Naive thymus-derived CD4-positive, alpha-beta T cell (primary cell): ENCODE measurements at regions of chr1 and their contacts with region 1.

Region 1: DNA sequence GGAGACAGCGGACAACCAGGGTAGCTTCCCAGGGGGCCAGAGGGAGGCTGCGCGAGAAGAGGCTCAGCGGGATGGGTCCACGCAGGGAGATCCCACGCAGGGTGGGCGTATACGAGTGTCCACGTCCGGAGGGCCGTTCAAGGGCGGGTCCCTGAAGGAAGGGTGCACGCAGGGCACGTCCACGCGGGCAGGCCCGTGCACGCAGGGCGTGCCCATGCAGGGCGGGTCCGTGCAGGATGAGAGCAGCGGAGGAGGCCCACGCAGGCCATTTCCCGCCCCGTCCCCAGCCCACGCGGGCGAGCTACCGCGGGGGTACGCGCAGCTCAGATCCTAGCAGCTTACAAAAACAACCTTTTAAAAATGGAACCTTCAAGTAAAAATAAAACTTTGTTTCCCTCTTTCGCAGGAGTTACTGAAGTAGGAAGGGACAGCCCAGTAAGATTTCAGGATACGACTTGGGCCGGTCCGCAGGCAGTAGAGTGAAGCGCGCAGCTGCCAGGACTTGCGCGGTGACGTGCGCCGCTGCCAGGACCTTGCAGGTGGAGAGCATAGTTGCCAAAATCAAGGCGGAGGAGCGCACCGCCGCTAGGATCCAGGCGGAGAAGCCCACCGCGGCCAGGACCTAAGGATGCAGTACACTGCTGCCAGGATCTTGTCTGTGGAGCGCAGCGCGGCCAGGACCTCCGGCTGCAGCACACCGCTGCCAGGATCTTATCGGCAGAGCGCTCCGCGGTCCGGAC is 416 bp upstream of the RNF187 start:
- DNase-seq: peak; percentile 76 to 91 (median 86)
- ATAC-seq: peak; percentile 85
- H3K4me3 ChIP-seq: peak overlapping the region; percentile 98
- H3K4me3 Mint-ChIP-seq: peak overlapping the region; percentile 92 to 99 (median 98)
- H3K27ac ChIP-seq: peak overlapping the region; percentile 99
- H3K27ac Mint-ChIP-seq: peak overlapping the region; percentile 99 to 100 (median 100)
- H3K4me1 ChIP-seq: peaks cover 15 to 19% of the 10 kb centered on the region in 2 donors
- H3K4me1 Mint-ChIP-seq: peaks cover 14 to 49% (median 36%) of the 10 kb centered on the region in 7 donors
- H3K27me3 ChIP-seq: no peaks in the 10 kb centered on the region
- H3K27me3 Mint-ChIP-seq: no peaks in the 10 kb centered on the region

Region 2: DNA sequence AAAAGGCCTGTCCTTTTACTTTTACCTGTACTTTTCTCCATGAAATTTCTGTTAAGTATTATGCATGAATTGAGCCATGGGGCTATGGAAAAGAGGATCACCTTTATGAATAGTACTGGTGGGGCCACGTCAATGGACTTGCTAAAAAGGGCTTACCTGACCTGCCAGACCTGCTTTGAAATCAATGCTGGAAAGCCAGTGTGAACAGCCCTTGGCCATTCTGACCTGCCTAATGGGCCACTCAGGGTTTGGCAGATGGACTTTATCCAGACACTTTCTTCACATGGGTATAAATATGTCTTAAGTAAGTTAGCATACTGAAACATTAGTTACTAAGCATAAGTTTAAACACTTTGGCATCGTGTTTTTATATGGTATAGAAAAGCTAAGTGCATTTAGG is 355.0 kb before region 1 on chr1:
- CTCF ChIA-PET with region 1: no interaction called
- POLR2A ChIA-PET with region 1: no interaction called
- intact Hi-C with region 1: loop called in 1 of 2 experiments (anchors 1 kb)
- DNase-seq: peak in 1 of 9 donors; percentile 6
- ATAC-seq: no peak
- H3K4me3 ChIP-seq: no peak overlapping the region
- H3K4me3 Mint-ChIP-seq: no peak overlapping the region
- H3K27ac ChIP-seq: no peak overlapping the region
- H3K27ac Mint-ChIP-seq: no peak overlapping the region
- H3K4me1 ChIP-seq: peaks cover 0 to 11% of the 10 kb centered on the region in 2 donors
- H3K4me1 Mint-ChIP-seq: peaks cover 0 to 11% (median 7%) of the 10 kb centered on the region in 7 donors
- H3K27me3 ChIP-seq: no peaks in the 10 kb centered on the region
- H3K27me3 Mint-ChIP-seq: peaks cover 0 to 53% (median 9%) of the 10 kb centered on the region in 5 donors

Region 3: GRCh38 chr1:228259951-228260350 is 226.8 kb before region 1 on chr1:
- CTCF ChIA-PET with region 1: no interaction called
- POLR2A ChIA-PET with region 1: no interaction called
- intact Hi-C with region 1: no loop called
- DNase-seq: no peak
- ATAC-seq: no peak
- H3K4me3 ChIP-seq: no peak overlapping the region
- H3K4me3 Mint-ChIP-seq: no peak overlapping the region
- H3K27ac ChIP-seq: no peak overlapping the region
- H3K27ac Mint-ChIP-seq: no peak overlapping the region
- H3K4me1 ChIP-seq: no peaks in the 10 kb centered on the region
- H3K4me1 Mint-ChIP-seq: peaks cover 0 to 11% (median 0%) of the 10 kb centered on the region in 7 donors
- H3K27me3 ChIP-seq: no peaks in the 10 kb centered on the region
- H3K27me3 Mint-ChIP-seq: no peaks in the 10 kb centered on the region

Region 4: GRCh38 chr1:228275739-228276421 is 210.9 kb before region 1 on chr1:
- CTCF ChIA-PET with region 1: no interaction called
- POLR2A ChIA-PET with region 1: interaction called, 3 read pairs
- intact Hi-C with region 1: loop called in 1 of 2 experiments (anchors 1 kb)
- DNase-seq: peak; percentile 53 to 88 (median 82)
- ATAC-seq: peak; percentile 96
- H3K4me3 ChIP-seq: peak overlapping the region; percentile 77
- H3K4me3 Mint-ChIP-seq: peak overlapping the region; percentile 71 to 88 (median 82)
- H3K27ac ChIP-seq: peak overlapping the region; percentile 77
- H3K27ac Mint-ChIP-seq: peak overlapping the region in 7 of 9 donors; percentile 21 to 73 (median 60)
- H3K4me1 ChIP-seq: no peaks in the 10 kb centered on the region
- H3K4me1 Mint-ChIP-seq: peaks cover 8 to 20% (median 19%) of the 10 kb centered on the region in 7 donors
- H3K27me3 ChIP-seq: no peaks in the 10 kb centered on the region
- H3K27me3 Mint-ChIP-seq: no peaks in the 10 kb centered on the region

Region 5: GRCh38 chr1:228315945-228316588 is 170.7 kb before region 1 on chr1:
- CTCF ChIA-PET with region 1: no interaction called
- POLR2A ChIA-PET with region 1: no interaction called
- intact Hi-C with region 1: no loop called
- DNase-seq: peak in 1 of 9 donors; percentile 18
- ATAC-seq: no peak
- H3K4me3 ChIP-seq: no peak overlapping the region
- H3K4me3 Mint-ChIP-seq: no peak overlapping the region
- H3K27ac ChIP-seq: no peak overlapping the region
- H3K27ac Mint-ChIP-seq: no peak overlapping the region
- H3K4me1 ChIP-seq: no peaks in the 10 kb centered on the region
- H3K4me1 Mint-ChIP-seq: no peaks in the 10 kb centered on the region
- H3K27me3 ChIP-seq: no peaks in the 10 kb centered on the region
- H3K27me3 Mint-ChIP-seq: no peaks in the 10 kb centered on the region

Region 6: GRCh38 chr1:228416217-228416933 is 70.4 kb before region 1 on chr1 and contains the start of gene TRIM17:
- CTCF ChIA-PET with region 1: no interaction called
- POLR2A ChIA-PET with region 1: no interaction called
- intact Hi-C with region 1: loop called in 1 of 2 experiments (anchors 2 kb)
- DNase-seq: peak in 8 of 9 donors; percentile 15 to 47 (median 31)
- ATAC-seq: peak; percentile 69
- H3K4me3 ChIP-seq: peak within 1 kb of the TSS; percentile 48
- H3K4me3 Mint-ChIP-seq: peak within 1 kb of the TSS; percentile 73 to 91 (median 86)
- H3K27ac ChIP-seq: peak within 1 kb of the TSS; percentile 11
- H3K27ac Mint-ChIP-seq: peak within 1 kb of the TSS in 8 of 9 donors; percentile 24 to 76 (median 38)
- H3K4me1 ChIP-seq: peaks cover 5 to 15% of the 10 kb centered on the region in 2 donors
- H3K4me1 Mint-ChIP-seq: peaks cover 8 to 30% (median 27%) of the 10 kb centered on the region in 7 donors
- H3K27me3 ChIP-seq: no peaks in the 10 kb centered on the region
- H3K27me3 Mint-ChIP-seq: peaks cover 0 to 45% (median 10%) of the 10 kb centered on the region in 5 donors
- total RNA-seq, gene TRIM17: 0.92 to 2.5 (median 1.8) TPM

Region 7: GRCh38 chr1:228500901-228501871 is 14.4 kb after region 1 on chr1:
- CTCF ChIA-PET with region 1: interaction called, 7 read pairs
- POLR2A ChIA-PET with region 1: interaction called, 12 read pairs
- intact Hi-C with region 1: loop called (anchors 1 kb)
- DNase-seq: peak; percentile 72 to 89 (median 85)
- ATAC-seq: peak; percentile 99
- H3K4me3 ChIP-seq: peak overlapping the region; percentile 44
- H3K4me3 Mint-ChIP-seq: peak overlapping the region; percentile 71 to 86 (median 80)
- H3K27ac ChIP-seq: no peak overlapping the region
- H3K27ac Mint-ChIP-seq: peak overlapping the region in 5 of 9 donors; percentile 19 to 72 (median 66)
- H3K4me1 ChIP-seq: peaks cover 9 to 14% of the 10 kb centered on the region in 2 donors
- H3K4me1 Mint-ChIP-seq: peaks cover 9 to 31% (median 18%) of the 10 kb centered on the region in 7 donors
- H3K27me3 ChIP-seq: no peaks in the 10 kb centered on the region
- H3K27me3 Mint-ChIP-seq: peaks cover 0 to 8% (median 0%) of the 10 kb centered on the region in 5 donors